Activated CD4-positive, alpha-beta T cell treated with anti-CD3 and anti-CD28 coated beads for 36 hours (primary cell): ENCODE measurements at regions of chr17 and their contacts with region 1.

Region 1: DNA sequence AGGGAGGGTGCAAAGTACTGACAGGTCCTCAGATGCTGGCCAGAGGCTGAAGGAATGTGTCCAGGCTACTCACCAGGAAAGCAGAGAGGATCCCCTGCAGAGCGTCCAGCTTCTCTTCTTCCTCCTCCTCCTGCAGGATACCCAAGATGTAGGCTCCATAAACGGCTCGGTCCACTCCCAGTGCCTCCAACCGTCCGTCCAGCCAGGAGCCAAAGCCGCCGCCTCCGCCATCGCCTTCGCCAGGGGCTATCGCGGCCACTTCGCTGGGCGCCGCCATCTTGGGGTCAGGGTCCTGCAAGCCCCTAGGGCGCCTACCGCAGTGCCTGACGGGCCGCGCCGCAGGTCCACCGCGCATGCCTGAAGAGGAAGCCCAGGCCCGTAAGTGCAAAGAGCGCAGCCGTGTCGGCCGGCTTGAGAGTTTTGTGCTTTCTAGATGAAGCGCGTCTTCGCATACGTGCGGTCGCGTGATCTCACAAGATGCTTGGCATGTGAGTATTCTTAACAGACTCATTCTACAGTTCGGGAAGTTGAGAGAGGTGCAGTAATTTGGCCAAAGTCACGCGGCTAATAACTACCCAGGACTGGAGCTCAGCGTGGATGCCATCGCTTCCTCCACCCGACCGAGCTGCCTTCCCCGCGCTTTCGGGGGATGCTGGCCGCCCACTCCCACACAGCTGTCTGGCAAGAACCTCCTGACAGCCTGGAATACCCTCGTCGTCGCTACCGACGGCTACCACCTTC is at the start of gene CCDC43:
- DNase-seq: peak; percentile 95
- ATAC-seq: peak; percentile 99
- H3K4me3 Mint-ChIP-seq: peak within 1 kb of the TSS; percentile 86
- H3K27ac Mint-ChIP-seq: peak within 1 kb of the TSS; percentile 93
- H3K4me1 Mint-ChIP-seq: peaks cover 26% of the 10 kb centered on the region
- H3K27me3 Mint-ChIP-seq: no peaks in the 10 kb centered on the region
- total RNA-seq, gene CCDC43: 31.8 to 33.7 TPM

Region 2: GRCh38 chr17:44053125-44053872 is 636.3 kb before region 1 on chr17:
- CTCF ChIA-PET with region 1: no interaction called
- POLR2A ChIA-PET with region 1: interaction called, 11 read pairs
- intact Hi-C with region 1: no loop called
- DNase-seq: no peak
- ATAC-seq: no peak
- H3K4me3 Mint-ChIP-seq: no peak overlapping the region
- H3K27ac Mint-ChIP-seq: peak overlapping the region; percentile 26
- H3K4me1 Mint-ChIP-seq: peaks cover 8% of the 10 kb centered on the region
- H3K27me3 Mint-ChIP-seq: no peaks in the 10 kb centered on the region

Region 3: DNA sequence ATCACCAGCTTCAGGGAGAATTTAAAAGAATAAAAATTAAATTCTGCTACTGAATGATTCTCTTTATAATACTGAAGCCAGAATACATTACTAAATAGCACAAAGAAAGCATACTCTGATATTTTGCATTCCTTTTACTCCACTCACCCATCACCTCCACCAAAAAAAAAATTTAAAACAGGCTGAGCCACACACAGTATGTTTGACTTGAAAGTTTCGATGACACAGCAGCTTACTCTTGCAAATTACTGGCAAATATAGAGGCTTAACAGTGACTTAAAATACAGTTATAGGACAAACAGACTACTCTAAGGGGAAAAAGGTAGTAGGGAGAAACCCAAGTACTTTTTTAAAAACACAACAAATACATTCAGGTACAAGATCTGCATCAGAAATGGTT is 225.6 kb before region 1 on chr17:
- CTCF ChIA-PET with region 1: no interaction called
- POLR2A ChIA-PET with region 1: no interaction called
- intact Hi-C with region 1: no loop called
- DNase-seq: no peak
- ATAC-seq: no peak
- H3K4me3 Mint-ChIP-seq: no peak overlapping the region
- H3K27ac Mint-ChIP-seq: peak overlapping the region; percentile 1
- H3K4me1 Mint-ChIP-seq: peaks cover 29% of the 10 kb centered on the region
- H3K27me3 Mint-ChIP-seq: no peaks in the 10 kb centered on the region

Region 4: GRCh38 chr17:44708401-44709181 is 18.9 kb after region 1 on chr17 and contains the start of gene DBF4B:
- CTCF ChIA-PET with region 1: interaction called, 6 read pairs
- POLR2A ChIA-PET with region 1: interaction called, 6 read pairs
- intact Hi-C with region 1: loop called (anchors 1 kb)
- DNase-seq: peak; percentile 89
- ATAC-seq: peak; percentile 85
- H3K4me3 Mint-ChIP-seq: no peak within 1 kb of the TSS
- H3K27ac Mint-ChIP-seq: no peak within 1 kb of the TSS
- H3K4me1 Mint-ChIP-seq: peaks cover 5% of the 10 kb centered on the region
- H3K27me3 Mint-ChIP-seq: peaks cover 5% of the 10 kb centered on the region
- total RNA-seq, gene DBF4B: 23.5 to 26.4 TPM

Region 5: DNA sequence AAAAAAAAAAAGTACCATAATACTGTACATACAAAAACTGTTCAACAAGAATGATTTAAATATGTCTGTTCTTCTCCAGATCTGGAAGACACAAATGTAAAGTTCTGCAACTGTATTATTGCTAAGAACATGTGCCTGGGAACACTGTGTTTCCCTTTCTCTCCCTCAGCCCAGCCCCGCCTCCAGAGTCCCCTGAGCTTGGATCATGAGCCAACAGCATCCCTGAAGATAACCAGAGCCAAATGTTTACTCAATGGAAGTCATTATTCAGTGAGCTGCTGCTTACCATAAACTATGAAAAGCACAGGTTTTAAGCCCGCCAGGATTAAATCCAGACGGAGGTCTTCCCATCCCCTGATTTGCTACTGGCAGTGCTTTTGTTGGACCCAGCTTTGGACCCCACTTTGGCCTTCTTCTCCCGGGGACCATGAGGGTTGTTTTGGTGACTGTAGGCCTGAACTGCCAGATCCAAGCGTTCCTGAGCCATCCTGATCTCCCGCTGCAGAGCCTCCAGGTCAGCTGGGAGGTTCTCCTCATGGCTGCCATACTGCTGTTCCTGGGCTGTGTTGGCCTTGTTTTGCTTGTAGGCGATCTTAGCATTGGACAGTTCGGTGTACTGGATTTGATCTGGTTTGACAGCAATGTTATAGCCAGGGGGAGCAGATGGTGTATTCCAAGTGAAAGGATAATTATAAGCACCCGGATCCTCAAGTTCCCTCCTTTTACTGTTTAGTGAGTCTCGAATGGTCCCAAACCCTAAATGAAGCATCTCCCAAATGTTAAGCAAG is 114.8 kb after region 1 on chr17:
- CTCF ChIA-PET with region 1: no interaction called
- POLR2A ChIA-PET with region 1: no interaction called
- intact Hi-C with region 1: no loop called
- DNase-seq: no peak
- ATAC-seq: no peak
- H3K4me3 Mint-ChIP-seq: no peak overlapping the region
- H3K27ac Mint-ChIP-seq: no peak overlapping the region
- H3K4me1 Mint-ChIP-seq: no peaks in the 10 kb centered on the region
- H3K27me3 Mint-ChIP-seq: no peaks in the 10 kb centered on the region